Activated B cell treated with CpG ODN at 0.5 μM for 24 hours (primary cell): ENCODE measurements at regions of chr1 and their contacts with region 1.

Region 1: DNA sequence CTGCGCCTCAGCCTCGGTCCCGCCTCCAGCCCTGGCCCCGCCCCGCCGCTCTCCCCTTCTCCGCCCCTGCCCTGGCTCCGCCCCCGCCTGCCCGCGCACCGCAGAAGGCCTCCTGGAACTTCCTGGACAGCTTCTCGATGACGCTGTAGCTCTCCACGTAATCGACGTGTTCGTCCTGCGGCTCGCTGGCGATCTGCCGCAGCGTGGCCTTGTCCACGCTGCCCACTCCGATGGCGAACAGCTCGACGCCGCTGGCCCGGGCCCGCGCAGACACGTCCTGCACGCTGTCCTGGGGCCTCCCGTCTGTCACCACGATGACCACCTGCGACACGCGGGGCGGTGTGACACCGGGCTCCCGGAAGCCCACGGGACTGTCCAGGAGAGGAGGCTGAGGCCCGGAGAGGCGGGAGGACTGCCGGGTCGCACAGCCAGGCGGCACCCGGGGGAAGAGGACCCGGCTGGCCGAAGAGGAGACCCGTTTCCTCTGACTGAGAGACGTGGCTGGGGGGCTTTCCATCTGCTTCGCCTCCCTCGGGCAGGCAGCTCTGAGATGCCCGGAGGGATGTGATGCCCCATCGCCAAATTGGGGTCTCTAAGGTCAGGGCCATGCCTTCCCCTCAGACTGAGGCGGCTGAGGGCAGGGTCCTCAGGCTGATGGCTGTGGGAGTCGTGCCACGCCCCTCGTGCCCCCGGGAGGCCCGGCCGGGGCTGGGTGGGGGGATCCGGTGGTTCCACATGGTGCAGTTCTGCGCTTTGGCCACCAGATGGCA is 4.6 kb downstream of the MATN1 start:
- DNase-seq: peak; percentile 87
- ATAC-seq: peak; percentile 66
- H3K4me3 Mint-ChIP-seq: peak overlapping the region; percentile 87
- H3K27ac Mint-ChIP-seq: peak overlapping the region; percentile 91
- H3K4me1 Mint-ChIP-seq: peaks cover 42% of the 10 kb centered on the region
- H3K27me3 Mint-ChIP-seq: no peaks in the 10 kb centered on the region
- CTCF ChIP-seq: peak; percentile 92

Region 2: GRCh38 chr1:30618335-30618747 is 100.5 kb before region 1 on chr1:
- CTCF ChIA-PET with region 1: no interaction called
- POLR2A ChIA-PET with region 1: no interaction called
- intact Hi-C with region 1: no loop called
- DNase-seq: no peak
- ATAC-seq: no peak
- H3K4me3 Mint-ChIP-seq: no peak overlapping the region
- H3K27ac Mint-ChIP-seq: no peak overlapping the region
- H3K4me1 Mint-ChIP-seq: no peaks in the 10 kb centered on the region
- H3K27me3 Mint-ChIP-seq: peaks cover 22% of the 10 kb centered on the region
- CTCF ChIP-seq: no peak

Region 3: DNA sequence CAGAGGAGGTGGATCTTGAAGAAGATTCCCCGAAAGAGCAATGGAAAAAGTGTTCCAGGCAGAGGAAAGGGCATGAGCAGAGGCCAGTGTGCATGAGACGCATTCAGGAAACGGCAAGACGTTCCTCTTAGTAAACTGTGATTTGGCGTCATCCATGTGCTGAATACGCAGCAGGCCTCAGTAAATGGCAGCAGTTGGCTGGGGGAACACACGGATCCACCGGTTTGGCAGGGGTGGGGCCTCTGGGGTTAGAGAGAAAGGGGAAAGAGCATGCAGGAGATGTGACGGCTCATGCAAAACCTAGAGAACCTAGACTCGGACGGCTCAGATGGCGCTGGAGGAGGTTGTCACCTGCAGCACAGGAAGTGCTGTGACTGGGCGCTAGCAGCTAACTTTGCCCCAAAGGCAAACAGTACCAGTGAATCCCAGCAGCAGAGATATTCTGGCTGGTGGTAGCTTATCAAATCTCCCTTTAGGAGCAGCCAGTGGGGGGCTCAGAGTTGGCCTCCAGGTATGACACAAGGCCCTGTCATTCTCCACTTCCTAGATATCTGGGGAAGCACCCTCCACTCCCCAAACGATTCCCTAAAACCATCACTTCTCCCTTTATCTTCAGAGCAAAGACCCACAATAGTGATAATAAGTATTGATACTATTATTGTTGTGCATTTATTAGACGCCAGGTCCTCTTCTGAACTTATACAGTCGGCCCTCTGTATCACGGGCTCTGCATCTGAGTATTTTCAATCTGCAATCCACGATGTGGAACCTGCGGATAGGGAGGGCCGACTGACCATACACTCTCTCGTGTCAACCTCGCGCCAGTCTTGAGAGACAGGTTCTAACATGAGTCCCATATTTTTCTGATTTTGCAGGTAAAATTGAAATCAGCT is 31.1 kb after region 1 on chr1:
- CTCF ChIA-PET with region 1: interaction called, 24 read pairs
- POLR2A ChIA-PET with region 1: interaction called, 662 read pairs
- intact Hi-C with region 1: loop called (anchors 1 kb)
- DNase-seq: peak; percentile 59
- ATAC-seq: peak; percentile 33
- H3K4me3 Mint-ChIP-seq: peak overlapping the region; percentile 79
- H3K27ac Mint-ChIP-seq: peak overlapping the region; percentile 96
- H3K4me1 Mint-ChIP-seq: peaks cover 95% of the 10 kb centered on the region
- H3K27me3 Mint-ChIP-seq: no peaks in the 10 kb centered on the region
- CTCF ChIP-seq: no peak

Region 4: GRCh38 chr1:30779294-30780071 is 60.7 kb after region 1 on chr1:
- CTCF ChIA-PET with region 1: interaction called, 232 read pairs
- POLR2A ChIA-PET with region 1: interaction called, 144 read pairs
- intact Hi-C with region 1: loop called (anchors 1 kb)
- DNase-seq: peak; percentile 96
- ATAC-seq: peak; percentile 77
- H3K4me3 Mint-ChIP-seq: peak overlapping the region; percentile 15
- H3K27ac Mint-ChIP-seq: peak overlapping the region; percentile 87
- H3K4me1 Mint-ChIP-seq: peaks cover 47% of the 10 kb centered on the region
- H3K27me3 Mint-ChIP-seq: no peaks in the 10 kb centered on the region
- CTCF ChIP-seq: peak; percentile 79

Region 5: GRCh38 chr1:30911046-30911954 is 192.5 kb after region 1 on chr1:
- CTCF ChIA-PET with region 1: interaction called, 52 read pairs
- POLR2A ChIA-PET with region 1: interaction called, 9 read pairs
- intact Hi-C with region 1: loop called (anchors 1 kb)
- DNase-seq: peak; percentile 47
- ATAC-seq: peak; percentile 48
- H3K4me3 Mint-ChIP-seq: no peak overlapping the region
- H3K27ac Mint-ChIP-seq: no peak overlapping the region
- H3K4me1 Mint-ChIP-seq: peaks cover 25% of the 10 kb centered on the region
- H3K27me3 Mint-ChIP-seq: peaks cover 30% of the 10 kb centered on the region
- CTCF ChIP-seq: no peak

Region 6: GRCh38 chr1:31296486-31297276 is 577.9 kb after region 1 on chr1 and contains the starts of genes SNRNP40 and ZCCHC17:
- CTCF ChIA-PET with region 1: no interaction called
- POLR2A ChIA-PET with region 1: interaction called, 5 read pairs
- intact Hi-C with region 1: loop called (anchors 2 kb)
- DNase-seq: peak; percentile 79
- ATAC-seq: peak; percentile 96
- H3K4me3 Mint-ChIP-seq: no peak within 1 kb of the TSS
- H3K27ac Mint-ChIP-seq: no peak within 1 kb of the TSS
- H3K4me1 Mint-ChIP-seq: peaks cover 13% of the 10 kb centered on the region
- H3K27me3 Mint-ChIP-seq: no peaks in the 10 kb centered on the region
- CTCF ChIP-seq: no peak
- total RNA-seq, gene SNRNP40: 83.2 and 85.1 TPM in 2 replicates
- total RNA-seq, gene ZCCHC17: 19.5 and 19.9 TPM in 2 replicates